Pancreas (tissue), 10 donors: ENCODE measurements at regions of chr12 and their contacts with region 1.

Region 1: GRCh38 chr12:124564232-124564958 is 3.0 kb downstream of the NCOR2 start:
- DNase-seq: no peak
- ATAC-seq: no peak
- H3K4me3 ChIP-seq: no peak overlapping the region
- H3K27ac ChIP-seq: peak overlapping the region in 2 of 4 donors; percentile 29 to 50
- H3K4me1 ChIP-seq: peaks cover 3 to 10% (median 7%) of the 10 kb centered on the region in 3 donors
- H3K27me3 ChIP-seq: no peaks in the 10 kb centered on the region
- CTCF ChIP-seq: no peak

Region 2: GRCh38 chr12:124520265-124520701 is 44.1 kb before region 1 on chr12:
- intact Hi-C with region 1: loop called in 1 of 3 experiments (anchors 5 kb)
- DNase-seq: peak; percentile 79 to 92 (median 88)
- ATAC-seq: peak; percentile 55 to 70 (median 60)
- H3K4me3 ChIP-seq: no peak overlapping the region
- H3K27ac ChIP-seq: peak overlapping the region; percentile 78 to 99 (median 98)
- H3K4me1 ChIP-seq: peaks cover 25 to 33% (median 32%) of the 10 kb centered on the region in 3 donors
- H3K27me3 ChIP-seq: no peaks in the 10 kb centered on the region
- CTCF ChIP-seq: no peak